Astrocyte of the cerebellum (primary cell): ENCODE measurements at regions of chr18 and their contacts with region 1.

Region 1: GRCh38 chr18:37484983-37485834 is 80.4 kb downstream of the CELF4 start:
- DNase-seq: no peak
- H3K4me3 ChIP-seq: no peak overlapping the region
- CTCF ChIP-seq: no peak

Region 2: GRCh38 chr18:37396971-37397720 is 88.1 kb before region 1 on chr18:
- in situ Hi-C with region 1: loop called (anchors 5 kb)
- DNase-seq: no peak
- H3K4me3 ChIP-seq: no peak overlapping the region
- CTCF ChIP-seq: no peak

Region 3: DNA sequence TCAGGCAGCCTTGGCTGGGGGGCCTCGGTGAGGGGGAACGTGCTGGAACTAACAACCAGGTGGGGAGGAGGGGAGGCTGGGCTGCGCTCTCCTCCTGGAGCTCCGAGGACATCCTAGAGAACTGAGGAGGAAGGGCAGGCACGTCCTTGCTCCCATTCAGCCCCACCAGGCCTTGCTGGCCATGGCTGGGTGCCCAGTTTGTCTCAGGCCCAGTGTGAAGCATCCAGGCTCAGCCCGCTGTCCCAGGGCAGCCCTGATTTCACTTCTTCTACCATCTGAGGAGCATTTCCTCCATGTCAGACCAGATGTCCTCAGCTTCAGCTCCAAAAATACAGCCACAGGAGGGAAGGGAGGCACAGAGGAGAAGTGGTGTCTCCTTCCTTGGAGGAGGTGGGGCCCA is 45.0 kb before region 1 on chr18:
- in situ Hi-C with region 1: no loop called
- DNase-seq: no peak
- H3K4me3 ChIP-seq: no peak overlapping the region
- CTCF ChIP-seq: no peak

Region 4: GRCh38 chr18:37450434-37451132 is 34.6 kb before region 1 on chr18:
- in situ Hi-C with region 1: loop called (anchors 5 kb)
- DNase-seq: no peak
- H3K4me3 ChIP-seq: no peak overlapping the region
- CTCF ChIP-seq: no peak

Region 5: DNA sequence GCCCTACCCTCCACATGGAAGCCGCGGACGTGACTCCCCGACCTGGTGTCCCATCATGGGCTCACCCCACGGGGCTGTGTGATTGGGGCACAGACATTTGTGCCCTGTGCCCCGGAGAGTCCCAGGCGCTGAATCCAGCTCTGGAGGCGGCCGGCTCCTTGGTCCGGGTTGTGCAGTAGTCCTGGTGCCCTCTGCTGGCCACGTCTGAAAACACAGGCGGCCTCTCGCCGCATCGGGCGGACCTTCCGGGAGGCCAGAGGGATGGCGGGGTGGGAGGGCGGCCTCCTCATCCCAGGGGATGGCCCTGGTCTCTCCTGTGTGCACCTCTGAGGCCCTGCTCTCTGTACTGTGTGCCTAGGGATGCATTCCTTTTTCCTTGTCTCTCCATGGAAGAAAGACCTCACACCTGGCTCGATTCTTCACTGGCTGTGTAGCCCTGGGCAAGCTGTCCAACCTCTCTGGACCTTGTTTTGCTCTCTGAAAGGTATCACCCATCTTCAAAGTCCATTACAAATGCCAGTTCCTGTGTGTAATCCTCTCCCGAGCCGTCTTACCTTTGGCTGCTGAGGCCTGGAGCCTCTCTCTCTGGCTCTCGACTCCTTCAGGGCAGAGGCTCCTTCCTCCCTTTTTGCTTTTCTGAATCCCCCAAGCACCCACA is 52.8 kb after region 1 on chr18:
- in situ Hi-C with region 1: no loop called
- DNase-seq: peak; percentile 15
- H3K4me3 ChIP-seq: no peak overlapping the region
- CTCF ChIP-seq: peak; percentile 85

Region 6: DNA sequence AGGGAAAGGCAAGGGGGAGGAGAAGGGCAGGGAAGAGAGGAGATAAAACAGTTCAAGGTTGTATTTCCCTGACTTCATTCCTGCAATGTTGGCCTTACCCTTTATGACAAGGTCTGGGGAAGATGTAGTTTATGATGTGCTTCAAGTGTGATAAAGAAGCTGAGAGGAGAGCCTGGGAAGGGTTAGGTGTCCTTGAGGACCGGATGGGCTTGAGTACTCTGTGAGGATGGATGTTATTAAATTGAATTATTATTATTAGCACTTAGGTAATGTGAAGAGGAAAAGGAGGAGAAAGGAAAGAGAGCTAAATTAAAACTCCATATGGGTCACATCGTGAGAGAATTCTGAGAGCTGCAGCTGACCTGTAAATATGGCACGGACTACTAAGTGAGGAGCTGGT is 799.8 kb after region 1 on chr18:
- in situ Hi-C with region 1: no loop called
- DNase-seq: no peak
- H3K4me3 ChIP-seq: no peak overlapping the region
- CTCF ChIP-seq: no peak